ENCODE measurements at regions of chr17 and their contacts with region 1.

Region 1: GRCh38 chr17:74736513-74737298 is at the start of gene RAB37:
- DNase-seq: peak; percentile 67
- ATAC-seq: peak; percentile 37
- H3K4me3 Mint-ChIP-seq: peak within 1 kb of the TSS; percentile 87
- H3K27ac Mint-ChIP-seq: peak within 1 kb of the TSS; percentile 91
- H3K4me1 Mint-ChIP-seq: peaks cover 47% of the 10 kb centered on the region
- H3K27me3 Mint-ChIP-seq: peaks cover 17% of the 10 kb centered on the region
- total RNA-seq, gene RAB37: 36.7 to 51.7 TPM

Region 2: DNA sequence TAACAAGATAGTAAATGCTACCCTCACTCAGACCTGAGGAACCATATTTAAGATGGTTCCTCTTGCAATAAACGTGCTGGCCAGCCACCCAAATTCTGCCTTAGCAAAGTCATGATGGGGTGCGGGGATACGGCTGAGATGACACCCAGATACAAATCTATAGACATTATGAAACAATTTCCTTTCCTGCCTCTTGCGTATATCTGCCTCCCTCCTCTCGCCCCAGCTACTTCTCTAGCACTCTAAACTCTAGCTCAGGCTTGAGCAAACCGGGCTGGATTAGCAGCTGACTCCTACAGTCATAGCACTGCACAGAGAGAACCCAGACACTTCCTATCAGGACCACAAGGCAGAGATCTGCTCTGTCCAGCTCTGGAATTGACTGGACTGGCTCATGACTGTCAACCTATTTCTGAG is 46.3 kb before region 1 on chr17:
- CTCF ChIA-PET with region 1: interaction called, 16 read pairs
- DNase-seq: peak; percentile 58
- ATAC-seq: peak; percentile 57
- H3K4me3 Mint-ChIP-seq: no peak overlapping the region
- H3K27ac Mint-ChIP-seq: peak overlapping the region; percentile 46
- H3K4me1 Mint-ChIP-seq: peaks cover 26% of the 10 kb centered on the region
- H3K27me3 Mint-ChIP-seq: peaks cover 24% of the 10 kb centered on the region

Region 3: GRCh38 chr17:74748529-74749365 is 12.0 kb after region 1 on chr17 and contains the start of gene NHERF1:
- CTCF ChIA-PET with region 1: interaction called, 124 read pairs
- DNase-seq: peak; percentile 96
- ATAC-seq: peak; percentile 87
- H3K4me3 Mint-ChIP-seq: peak within 1 kb of the TSS; percentile 100
- H3K27ac Mint-ChIP-seq: peak within 1 kb of the TSS; percentile 85
- H3K4me1 Mint-ChIP-seq: peaks cover 54% of the 10 kb centered on the region
- H3K27me3 Mint-ChIP-seq: no peaks in the 10 kb centered on the region
- total RNA-seq, gene NHERF1: 284 to 377 TPM

Region 4: DNA sequence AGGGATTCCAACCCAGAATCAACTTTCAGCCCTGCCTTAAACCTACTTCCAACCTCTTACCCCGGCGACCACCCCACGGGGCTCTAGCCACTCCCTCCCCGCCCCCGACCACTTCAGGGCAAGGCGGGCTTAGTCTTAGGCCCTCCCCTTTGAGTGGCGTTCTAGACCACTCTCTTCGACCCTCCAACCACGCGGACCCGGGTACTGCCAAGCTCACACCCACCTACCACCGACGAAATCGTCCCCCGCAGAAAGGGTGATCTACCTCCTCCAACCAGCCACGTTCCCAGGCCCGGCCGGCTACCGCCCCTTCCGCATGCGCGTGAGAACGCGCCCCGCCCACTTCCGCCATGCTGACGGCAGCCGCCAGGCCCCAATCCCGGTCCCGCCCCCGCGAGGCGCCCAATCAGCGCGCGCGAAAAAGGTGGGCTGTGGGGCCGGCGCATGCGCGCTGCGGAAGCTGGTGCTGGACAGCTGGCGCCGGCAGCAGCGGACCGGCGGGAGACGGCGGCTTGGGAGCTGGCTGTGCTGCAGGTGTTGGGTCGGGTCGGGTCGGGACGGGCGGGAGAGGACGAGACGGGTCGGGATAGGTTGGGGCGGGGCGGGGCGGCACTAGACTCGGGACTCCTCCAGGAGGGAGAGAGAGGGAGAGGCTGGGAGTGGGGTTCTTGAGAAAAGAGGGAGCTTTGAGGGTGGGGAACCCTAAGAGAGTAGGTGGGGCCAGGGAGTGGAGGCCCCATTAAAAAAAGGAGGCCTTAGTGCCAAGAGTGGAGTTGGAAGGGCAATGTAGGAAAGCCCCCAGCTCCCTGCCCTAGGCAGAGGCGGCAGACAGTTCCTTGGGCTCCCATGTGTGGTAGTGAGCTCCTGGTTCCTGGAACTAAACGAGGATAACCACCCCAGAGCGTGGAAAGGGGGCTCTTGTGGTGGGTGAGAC is 39.6 kb after region 1 on chr17 and contains the start of gene NAT9:
- CTCF ChIA-PET with region 1: interaction called, 68 read pairs
- DNase-seq: peak; percentile 98
- ATAC-seq: peak; percentile 85
- H3K4me3 Mint-ChIP-seq: peak within 1 kb of the TSS; percentile 99
- H3K27ac Mint-ChIP-seq: peak within 1 kb of the TSS; percentile 86
- H3K4me1 Mint-ChIP-seq: peaks cover 62% of the 10 kb centered on the region
- H3K27me3 Mint-ChIP-seq: no peaks in the 10 kb centered on the region
- total RNA-seq, gene NAT9: 34.1 to 34.5 TPM